ENCODE measurements at regions of chr7 and their contacts with region 1.

Region 1: DNA sequence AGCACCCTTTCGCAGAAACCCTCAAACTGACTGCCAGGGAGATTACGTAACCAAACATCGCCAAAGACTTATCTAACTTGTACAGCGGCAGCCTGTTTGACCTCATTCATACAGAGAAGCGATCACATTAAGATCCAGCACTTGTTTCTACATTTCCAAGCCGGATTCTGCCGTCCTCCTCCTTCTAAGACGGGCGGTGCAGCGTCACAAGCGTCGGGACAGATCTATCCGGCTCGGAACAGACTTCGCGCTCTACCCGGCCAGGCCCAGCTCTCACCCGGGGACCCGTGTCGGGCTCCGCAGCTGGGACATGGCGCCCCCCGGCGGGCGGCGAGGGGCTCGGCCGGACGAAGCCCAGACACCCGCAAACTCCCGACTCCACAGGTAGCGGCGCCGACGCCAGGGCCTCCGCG is 373 bp downstream of the H2AZ2 start:
- DNase-seq: peak; percentile 76 to 94
- H3K4me3 ChIP-seq: peak overlapping the region; percentile 69
- H3K27ac ChIP-seq: peak overlapping the region; percentile 51
- H3K4me1 ChIP-seq: peaks cover 27% of the 10 kb centered on the region
- H3K27me3 ChIP-seq: no peaks in the 10 kb centered on the region
- CTCF ChIP-seq: peak; percentile 96

Region 2: GRCh38 chr7:44581879-44582603 is 265.5 kb before region 1 on chr7 and contains the start of gene TMED4:
- CTCF ChIA-PET with region 1: interaction called, 3 read pairs
- POLR2A ChIA-PET with region 1: interaction called, 12 read pairs
- intact Hi-C with region 1: loop called (anchors 1 kb)
- DNase-seq: peak; percentile 97 to 100
- H3K4me3 ChIP-seq: peak within 1 kb of the TSS; percentile 92
- H3K27ac ChIP-seq: peak within 1 kb of the TSS; percentile 78
- H3K4me1 ChIP-seq: peaks cover 27% of the 10 kb centered on the region
- H3K27me3 ChIP-seq: no peaks in the 10 kb centered on the region
- CTCF ChIP-seq: no peak
- total RNA-seq, gene TMED4: 134 and 161 TPM in 2 replicates

Region 3: DNA sequence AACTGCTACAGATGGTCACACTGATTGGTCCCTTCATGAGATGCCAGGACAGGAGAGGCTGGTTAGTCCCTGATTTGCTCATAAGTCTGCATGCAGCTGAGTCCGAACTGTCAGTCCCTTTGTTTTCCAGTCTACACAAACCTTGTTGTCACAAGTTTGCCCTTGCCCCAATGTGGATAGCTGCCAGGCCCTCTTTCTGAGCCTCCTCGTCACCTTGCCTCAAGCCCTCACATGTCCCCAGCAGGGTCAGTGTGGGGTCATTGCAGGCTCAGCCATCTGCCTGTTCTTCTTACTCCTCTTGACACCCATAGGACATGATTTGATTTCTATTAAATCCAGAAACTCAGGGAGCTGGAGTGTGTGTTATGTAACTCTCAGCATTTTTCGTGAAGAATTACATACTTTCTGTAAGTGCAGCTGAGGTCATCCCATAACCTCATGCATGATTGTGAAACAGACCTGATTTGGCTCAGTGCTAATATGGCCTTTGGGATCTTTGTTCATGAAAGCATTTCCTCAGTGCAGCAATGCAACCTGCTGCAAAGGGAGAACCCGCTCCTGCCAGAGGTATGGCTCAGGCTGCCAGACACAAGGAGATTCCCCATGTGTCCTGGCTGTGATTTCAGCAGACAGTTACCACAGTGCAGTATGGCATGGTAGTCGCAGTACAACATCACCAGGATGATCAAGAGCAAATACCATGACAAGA is 168.9 kb before region 1 on chr7:
- CTCF ChIA-PET with region 1: no interaction called
- POLR2A ChIA-PET with region 1: no interaction called
- intact Hi-C with region 1: loop called (anchors 10 kb)
- DNase-seq: peak in 1 of 2 experiments; percentile 22
- H3K4me3 ChIP-seq: no peak overlapping the region
- H3K27ac ChIP-seq: no peak overlapping the region
- H3K4me1 ChIP-seq: no peaks in the 10 kb centered on the region
- H3K27me3 ChIP-seq: no peaks in the 10 kb centered on the region
- CTCF ChIP-seq: no peak

Region 4: GRCh38 chr7:44764665-44765578 is 82.6 kb before region 1 on chr7:
- CTCF ChIA-PET with region 1: no interaction called
- POLR2A ChIA-PET with region 1: interaction called, 8 read pairs
- intact Hi-C with region 1: loop called (anchors 2 kb)
- DNase-seq: no peak
- H3K4me3 ChIP-seq: no peak overlapping the region
- H3K27ac ChIP-seq: no peak overlapping the region
- H3K4me1 ChIP-seq: peaks cover 5% of the 10 kb centered on the region
- H3K27me3 ChIP-seq: no peaks in the 10 kb centered on the region
- CTCF ChIP-seq: peak; percentile 52

Region 5: GRCh38 chr7:44921607-44922359 is 74.3 kb after region 1 on chr7:
- CTCF ChIA-PET with region 1: interaction called, 12 read pairs
- POLR2A ChIA-PET with region 1: no interaction called
- intact Hi-C with region 1: loop called (anchors 2 kb)
- DNase-seq: peak; percentile 61 to 82
- H3K4me3 ChIP-seq: no peak overlapping the region
- H3K27ac ChIP-seq: no peak overlapping the region
- H3K4me1 ChIP-seq: no peaks in the 10 kb centered on the region
- H3K27me3 ChIP-seq: no peaks in the 10 kb centered on the region
- CTCF ChIP-seq: peak; percentile 99

Region 6: DNA sequence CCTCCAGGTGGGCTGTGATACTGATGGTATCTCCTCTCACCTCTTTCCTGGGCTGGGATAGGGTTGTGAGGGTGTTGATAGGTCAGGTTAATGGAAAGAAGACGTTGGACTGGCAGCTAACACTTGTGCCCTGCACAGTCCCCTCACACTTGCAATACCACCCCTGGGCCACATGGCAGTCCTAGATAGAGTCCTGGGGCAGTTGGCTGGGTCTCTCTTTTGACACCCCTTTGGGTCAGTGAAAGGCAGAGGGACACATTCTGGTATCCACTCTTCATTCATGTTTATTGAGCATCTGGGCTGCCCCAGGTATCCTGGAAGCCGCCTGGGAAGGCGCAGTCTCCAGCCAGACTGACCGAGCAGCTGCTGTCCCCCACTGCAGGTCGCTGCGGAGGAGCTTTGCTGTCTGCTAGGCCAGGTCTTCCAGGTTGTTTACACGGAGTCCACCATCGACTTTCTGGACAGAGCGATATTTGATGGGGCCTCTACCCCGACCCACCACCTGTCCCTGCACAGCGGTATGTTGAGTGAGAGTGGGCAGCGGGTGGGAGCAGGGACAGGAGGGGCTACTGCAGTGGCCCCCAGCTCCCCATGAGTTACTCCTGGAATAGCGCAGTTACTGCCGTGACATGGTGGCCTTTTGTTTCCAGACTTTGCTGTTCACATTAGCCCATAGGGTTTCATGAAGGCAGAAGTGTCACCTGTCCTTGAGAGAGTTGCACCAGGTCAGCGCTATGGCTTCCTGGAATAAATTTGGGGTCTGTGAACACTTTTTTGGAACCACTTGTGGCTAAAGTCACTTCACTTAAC is 222.1 kb after region 1 on chr7:
- CTCF ChIA-PET with region 1: no interaction called
- POLR2A ChIA-PET with region 1: no interaction called
- intact Hi-C with region 1: no loop called
- DNase-seq: no peak
- H3K4me3 ChIP-seq: no peak overlapping the region
- H3K27ac ChIP-seq: no peak overlapping the region
- H3K4me1 ChIP-seq: peaks cover 10% of the 10 kb centered on the region
- H3K27me3 ChIP-seq: no peaks in the 10 kb centered on the region
- CTCF ChIP-seq: no peak